Psoas muscle (tissue), 8 donors: ENCODE measurements at regions of chr4 and their contacts with region 1.

Region 1: DNA sequence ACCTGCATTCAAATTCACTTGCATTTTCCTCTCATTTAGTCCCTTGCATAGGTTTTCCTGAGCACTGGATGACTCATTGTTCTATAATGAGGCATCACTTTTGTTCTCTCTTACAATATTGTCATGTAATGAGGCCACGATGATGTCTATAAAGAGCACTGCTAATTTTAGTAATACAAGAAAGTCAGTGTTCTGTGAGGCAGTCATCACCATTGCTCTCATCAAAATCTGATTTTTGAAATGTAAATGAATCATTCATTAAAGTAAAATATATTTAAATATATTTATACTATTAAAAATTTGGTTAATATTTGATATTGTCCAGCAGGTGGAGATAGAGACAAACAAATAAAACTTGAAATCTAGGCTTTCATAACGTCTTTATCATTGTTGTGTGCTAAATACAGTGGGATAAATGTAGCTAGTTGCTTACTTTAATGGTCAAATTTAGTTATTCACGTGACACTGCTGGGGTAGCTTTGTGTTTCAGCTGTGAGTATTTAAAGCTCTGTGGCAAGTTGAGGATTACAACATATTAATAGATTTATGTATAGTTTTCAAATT is 15.4 kb downstream of the HMGB2 start:
- DNase-seq: no peak
- ATAC-seq: peak; percentile 62 to 88 (median 74)
- H3K4me3 ChIP-seq: no peak overlapping the region
- H3K27ac ChIP-seq: no peak overlapping the region
- H3K4me1 ChIP-seq: no peaks in the 10 kb centered on the region
- H3K27me3 ChIP-seq: no peaks in the 10 kb centered on the region
- CTCF ChIP-seq: peak; percentile 66

Region 2: GRCh38 chr4:173494013-173494970 is 175.6 kb after region 1 on chr4:
- intact Hi-C with region 1: loop called (anchors 5 to 10 kb)
- DNase-seq: no peak
- ATAC-seq: peak; percentile 82 to 95 (median 82)
- H3K4me3 ChIP-seq: peak overlapping the region; percentile 56
- H3K27ac ChIP-seq: no peak overlapping the region
- H3K4me1 ChIP-seq: no peaks in the 10 kb centered on the region
- H3K27me3 ChIP-seq: peaks cover 0 to 48% (median 3%) of the 10 kb centered on the region in 3 donors
- CTCF ChIP-seq: peak; percentile 73